Activated B cell treated with CpG ODN at 0.5 μM for 24 hours (primary cell): ENCODE measurements at regions of chr6 and their contacts with region 1.

Region 1: GRCh38 chr6:87154993-87155841 is at the start of gene ZNF292:
- DNase-seq: peak; percentile 94
- ATAC-seq: peak; percentile 85
- H3K4me3 Mint-ChIP-seq: peak within 1 kb of the TSS; percentile 91
- H3K27ac Mint-ChIP-seq: peak within 1 kb of the TSS; percentile 97
- H3K4me1 Mint-ChIP-seq: peaks cover 57% of the 10 kb centered on the region
- H3K27me3 Mint-ChIP-seq: no peaks in the 10 kb centered on the region
- CTCF ChIP-seq: no peak
- total RNA-seq, gene ZNF292: 54.8 and 66.6 TPM in 2 replicates

Region 2: GRCh38 chr6:85642774-85643536 is 1512.3 kb before region 1 on chr6 and contains the start of gene SYNCRIP:
- CTCF ChIA-PET with region 1: no interaction called
- POLR2A ChIA-PET with region 1: no interaction called
- intact Hi-C with region 1: loop called (anchors 1 kb)
- DNase-seq: peak; percentile 98
- ATAC-seq: peak; percentile 81
- H3K4me3 Mint-ChIP-seq: peak within 1 kb of the TSS; percentile 98
- H3K27ac Mint-ChIP-seq: peak within 1 kb of the TSS; percentile 99
- H3K4me1 Mint-ChIP-seq: peaks cover 46% of the 10 kb centered on the region
- H3K27me3 Mint-ChIP-seq: no peaks in the 10 kb centered on the region
- CTCF ChIP-seq: no peak
- total RNA-seq, gene SYNCRIP: 119 and 122 TPM in 2 replicates

Region 3: GRCh38 chr6:87174078-87174579 is 18.9 kb after region 1 on chr6:
- CTCF ChIA-PET with region 1: interaction called, 4 read pairs
- POLR2A ChIA-PET with region 1: no interaction called
- intact Hi-C with region 1: loop called (anchors 2 kb)
- DNase-seq: no peak
- ATAC-seq: no peak
- H3K4me3 Mint-ChIP-seq: peak overlapping the region; percentile 7
- H3K27ac Mint-ChIP-seq: peak overlapping the region; percentile 66
- H3K4me1 Mint-ChIP-seq: peaks cover 80% of the 10 kb centered on the region
- H3K27me3 Mint-ChIP-seq: no peaks in the 10 kb centered on the region
- CTCF ChIP-seq: no peak

Region 4: DNA sequence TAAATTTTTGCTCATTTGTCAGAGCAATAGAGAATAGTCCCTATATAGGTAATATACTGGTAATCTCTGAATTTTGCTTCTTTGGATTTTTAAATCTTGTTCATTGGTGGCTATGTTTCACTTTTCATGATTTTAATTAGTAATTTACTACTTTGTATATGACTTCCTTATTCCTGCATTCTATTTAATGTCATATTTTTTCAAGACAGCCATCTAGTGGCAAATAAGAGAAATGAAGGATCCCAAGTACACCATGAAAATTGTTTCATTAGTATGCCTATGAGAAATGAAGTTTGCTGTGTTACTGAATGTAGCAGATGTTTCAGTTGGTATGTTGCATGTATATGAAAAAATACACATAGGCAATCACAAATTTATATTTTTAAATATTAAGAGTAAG is 82.6 kb after region 1 on chr6:
- CTCF ChIA-PET with region 1: no interaction called
- POLR2A ChIA-PET with region 1: interaction called, 4 read pairs
- intact Hi-C with region 1: loop called (anchors 1 kb)
- DNase-seq: no peak
- ATAC-seq: peak; percentile 66
- H3K4me3 Mint-ChIP-seq: no peak overlapping the region
- H3K27ac Mint-ChIP-seq: no peak overlapping the region
- H3K4me1 Mint-ChIP-seq: peaks cover 3% of the 10 kb centered on the region
- H3K27me3 Mint-ChIP-seq: no peaks in the 10 kb centered on the region
- CTCF ChIP-seq: no peak

Region 5: DNA sequence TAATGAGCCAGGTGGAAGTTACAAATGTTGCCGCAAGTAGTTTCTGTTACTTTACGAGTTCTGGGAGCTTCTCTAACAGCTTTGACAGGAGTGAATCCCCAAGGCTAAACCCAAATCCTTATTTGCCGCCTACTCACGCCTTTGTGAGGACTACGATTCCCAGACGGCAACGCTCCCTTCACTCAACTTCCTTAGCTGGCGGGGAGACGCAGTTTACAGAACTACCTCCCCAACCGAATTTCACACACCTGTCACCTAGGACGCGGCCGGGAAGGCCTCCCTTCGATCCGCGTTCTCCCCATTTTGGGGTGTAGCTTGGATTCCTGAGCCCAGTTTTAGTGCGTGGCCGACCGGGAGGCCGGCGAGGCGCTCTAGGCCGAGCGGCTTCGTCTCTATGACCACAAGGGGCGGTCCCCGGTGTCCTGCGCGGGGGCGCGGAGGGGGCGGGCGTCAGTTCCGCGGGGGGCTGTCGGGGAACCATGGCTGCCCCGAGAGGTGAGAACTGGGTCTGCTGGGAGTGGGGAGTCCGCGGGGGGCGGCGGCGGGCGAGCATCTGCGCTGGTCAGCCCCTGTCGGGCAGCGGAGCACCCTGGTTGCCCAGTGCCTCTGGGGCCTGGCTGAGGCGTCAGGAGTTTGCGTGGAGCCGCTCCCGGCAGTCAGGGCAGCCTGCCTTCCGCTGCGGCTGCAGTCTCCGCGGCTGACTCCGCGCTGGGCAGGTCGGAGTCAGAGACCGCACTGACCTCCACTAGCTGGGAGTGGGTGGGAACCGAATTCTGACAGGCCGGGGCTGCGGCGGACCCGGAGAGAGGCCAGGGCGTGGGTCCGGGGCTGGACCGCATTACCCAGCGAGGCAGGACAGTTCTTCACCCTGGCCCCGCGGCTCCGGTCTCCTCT is 317.6 kb after region 1 on chr6 and contains the start of gene SLC35A1:
- CTCF ChIA-PET with region 1: no interaction called
- POLR2A ChIA-PET with region 1: no interaction called
- intact Hi-C with region 1: loop called (anchors 1 kb)
- DNase-seq: peak; percentile 88
- ATAC-seq: peak; percentile 97
- H3K4me3 Mint-ChIP-seq: peak within 1 kb of the TSS; percentile 97
- H3K27ac Mint-ChIP-seq: peak within 1 kb of the TSS; percentile 98
- H3K4me1 Mint-ChIP-seq: peaks cover 12% of the 10 kb centered on the region
- H3K27me3 Mint-ChIP-seq: peaks cover 6% of the 10 kb centered on the region
- CTCF ChIP-seq: no peak
- total RNA-seq, gene SLC35A1: 7.5 and 8.7 TPM in 2 replicates

Region 6: GRCh38 chr6:88177961-88178464 is 1022.8 kb after region 1 on chr6:
- CTCF ChIA-PET with region 1: no interaction called
- POLR2A ChIA-PET with region 1: no interaction called
- intact Hi-C with region 1: loop called (anchors 5 kb)
- DNase-seq: no peak
- ATAC-seq: peak; percentile 75
- H3K4me3 Mint-ChIP-seq: peak overlapping the region; percentile 36
- H3K27ac Mint-ChIP-seq: peak overlapping the region; percentile 77
- H3K4me1 Mint-ChIP-seq: peaks cover 54% of the 10 kb centered on the region
- H3K27me3 Mint-ChIP-seq: no peaks in the 10 kb centered on the region
- CTCF ChIP-seq: no peak